CD4-positive, alpha-beta T cell (primary cell): ENCODE measurements at regions of chr4 and their contacts with region 1.

Region 1: GRCh38 chr4:2468445-2469192 is at the start of gene RNF4:
- DNase-seq: peak; percentile 89 to 98 (median 94)
- ATAC-seq: peak; percentile 84
- H3K4me3 ChIP-seq: peak within 1 kb of the TSS; percentile 98
- H3K4me3 Mint-ChIP-seq: peak within 1 kb of the TSS; percentile 94
- H3K27ac ChIP-seq: peak within 1 kb of the TSS; percentile 96 to 97
- H3K27ac Mint-ChIP-seq: peak within 1 kb of the TSS; percentile 94
- H3K4me1 ChIP-seq: peaks cover 48% of the 10 kb centered on the region
- H3K4me1 Mint-ChIP-seq: peaks cover 48% of the 10 kb centered on the region
- H3K27me3 ChIP-seq: no peaks in the 10 kb centered on the region
- H3K27me3 Mint-ChIP-seq: no peaks in the 10 kb centered on the region
- CTCF ChIP-seq: no peak
- total RNA-seq, gene RNF4: 106 to 109 TPM

Region 2: GRCh38 chr4:2341261-2341841 is 127.3 kb before region 1 on chr4:
- CTCF ChIA-PET with region 1: no interaction called
- POLR2A ChIA-PET with region 1: no interaction called
- intact Hi-C with region 1: no loop called
- DNase-seq: peak in 1 of 14 experiments; percentile 29
- ATAC-seq: no peak
- H3K4me3 ChIP-seq: no peak overlapping the region
- H3K4me3 Mint-ChIP-seq: no peak overlapping the region
- H3K27ac ChIP-seq: no peak overlapping the region
- H3K27ac Mint-ChIP-seq: no peak overlapping the region
- H3K4me1 ChIP-seq: no peaks in the 10 kb centered on the region
- H3K4me1 Mint-ChIP-seq: no peaks in the 10 kb centered on the region
- H3K27me3 ChIP-seq: no peaks in the 10 kb centered on the region
- H3K27me3 Mint-ChIP-seq: no peaks in the 10 kb centered on the region
- CTCF ChIP-seq: no peak

Region 3: DNA sequence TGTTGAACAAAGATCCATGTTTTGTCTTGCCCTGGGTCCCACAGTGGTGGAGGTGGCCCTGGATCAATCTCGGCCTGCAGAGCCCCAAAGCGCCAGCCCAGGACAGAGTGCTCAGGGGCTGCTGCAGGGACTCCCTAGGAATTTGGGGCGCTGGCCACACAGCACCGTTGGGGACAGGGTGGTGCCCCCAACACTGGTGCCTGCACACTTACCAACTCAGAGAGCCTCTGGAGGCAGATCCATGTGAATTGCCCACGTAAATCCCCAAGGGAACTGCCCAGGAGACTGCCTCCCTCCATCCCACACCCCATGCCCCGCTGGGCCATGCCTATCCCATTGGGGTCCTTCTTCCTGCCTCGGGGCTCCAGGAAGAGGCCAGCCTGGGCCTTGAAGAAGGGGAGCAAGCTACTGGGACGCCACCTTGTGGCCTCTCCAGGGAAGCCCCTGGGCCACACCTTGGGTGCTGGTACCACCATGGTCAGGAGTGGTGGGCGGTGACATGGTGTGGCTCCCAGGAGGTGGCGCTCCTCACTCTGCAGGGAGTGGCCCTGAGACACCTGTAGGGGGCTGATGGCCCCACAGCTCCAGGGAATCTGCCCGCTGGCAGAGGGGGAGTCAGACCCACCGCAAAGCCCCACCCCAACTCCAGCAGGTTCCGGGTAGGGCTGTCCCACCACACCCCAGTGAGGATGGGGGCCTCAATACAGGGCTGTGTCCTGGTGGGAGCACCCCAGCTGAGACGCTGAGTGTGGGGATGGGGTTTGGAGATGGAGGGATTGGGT is 27.0 kb before region 1 on chr4:
- CTCF ChIA-PET with region 1: interaction called, 14 read pairs
- POLR2A ChIA-PET with region 1: interaction called, 3 read pairs
- intact Hi-C with region 1: no loop called
- DNase-seq: peak; percentile 52 to 87 (median 67)
- ATAC-seq: peak; percentile 99
- H3K4me3 ChIP-seq: no peak overlapping the region
- H3K4me3 Mint-ChIP-seq: no peak overlapping the region
- H3K27ac ChIP-seq: no peak overlapping the region
- H3K27ac Mint-ChIP-seq: no peak overlapping the region
- H3K4me1 ChIP-seq: peaks cover 9% of the 10 kb centered on the region
- H3K4me1 Mint-ChIP-seq: no peaks in the 10 kb centered on the region
- H3K27me3 ChIP-seq: no peaks in the 10 kb centered on the region
- H3K27me3 Mint-ChIP-seq: no peaks in the 10 kb centered on the region
- CTCF ChIP-seq: peak; percentile 69

Region 4: GRCh38 chr4:2484993-2485392 is 16.4 kb after region 1 on chr4:
- CTCF ChIA-PET with region 1: interaction called, 5 read pairs
- POLR2A ChIA-PET with region 1: interaction called, 74 read pairs
- intact Hi-C with region 1: loop called (anchors 2 kb)
- DNase-seq: peak; percentile 43 to 85 (median 64)
- ATAC-seq: peak; percentile 92
- H3K4me3 ChIP-seq: peak overlapping the region; percentile 35
- H3K4me3 Mint-ChIP-seq: peak overlapping the region; percentile 64
- H3K27ac ChIP-seq: peak overlapping the region in 1 of 2 donors; percentile 74
- H3K27ac Mint-ChIP-seq: peak overlapping the region; percentile 75
- H3K4me1 ChIP-seq: peaks cover 94% of the 10 kb centered on the region
- H3K4me1 Mint-ChIP-seq: peaks cover 77% of the 10 kb centered on the region
- H3K27me3 ChIP-seq: no peaks in the 10 kb centered on the region
- H3K27me3 Mint-ChIP-seq: no peaks in the 10 kb centered on the region
- CTCF ChIP-seq: no peak